WTC11 (cell line): ENCODE measurements at regions of chr20 and their contacts with region 1.

Region 1: DNA sequence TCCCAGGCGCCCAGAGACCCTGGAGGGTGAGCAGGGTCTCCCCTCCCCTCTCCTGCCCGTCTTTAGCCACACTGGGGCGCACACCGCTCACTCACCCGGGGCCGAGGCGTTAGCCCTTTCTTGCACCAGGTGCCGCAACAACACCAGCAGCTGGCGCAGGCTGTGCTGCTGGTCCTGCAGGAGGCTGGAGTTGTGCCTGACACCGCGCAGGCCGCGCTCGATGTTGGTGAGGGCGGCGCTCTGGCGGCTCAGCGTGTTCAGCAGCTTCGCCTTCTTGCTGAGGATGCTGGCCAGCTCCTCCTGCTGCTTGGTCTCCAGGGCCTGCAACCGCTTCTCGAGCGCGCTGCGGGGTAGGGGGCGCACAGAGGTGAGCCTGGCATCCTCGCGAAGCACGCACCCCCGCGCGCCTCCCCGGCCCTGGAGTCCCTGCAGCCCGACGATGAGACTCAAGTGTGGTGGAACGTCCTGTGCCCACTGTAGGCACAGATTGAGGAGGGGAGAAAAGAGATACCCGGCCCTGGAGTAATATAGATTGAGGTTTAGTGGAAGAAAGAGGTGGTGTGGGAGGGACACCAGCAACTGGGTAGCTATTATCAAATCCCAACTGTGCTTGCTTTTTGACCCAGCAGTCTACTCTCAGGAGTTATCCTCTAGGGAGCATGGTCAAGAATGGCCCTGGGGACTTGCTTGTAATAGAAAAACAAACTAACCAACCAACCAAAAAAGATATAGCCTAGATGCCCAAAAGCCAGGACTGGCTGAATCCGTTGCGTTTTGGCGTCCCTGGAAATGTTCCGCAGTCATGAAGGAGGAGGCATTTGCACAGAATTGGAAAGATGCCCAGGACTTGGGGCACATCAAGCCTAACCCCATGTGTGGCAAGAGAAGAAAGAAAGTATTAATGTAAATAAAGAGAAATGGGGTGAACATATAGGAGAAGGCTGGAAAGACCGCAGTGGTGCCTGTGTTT is 30.9 kb downstream of the ANGPT4 start:
- DNase-seq: peak; percentile 90
- ATAC-seq: peak; percentile 99
- H3K4me3 Mint-ChIP-seq: peak overlapping the region; percentile 55
- H3K27ac Mint-ChIP-seq: no peak overlapping the region
- H3K4me1 Mint-ChIP-seq: peaks cover 9% of the 10 kb centered on the region
- H3K27me3 Mint-ChIP-seq: peaks cover 17% of the 10 kb centered on the region
- CTCF ChIP-seq: no peak

Region 2: GRCh38 chr20:667391-667964 is 217.8 kb before region 1 on chr20:
- CTCF ChIA-PET with region 1: no interaction called
- POLR2A ChIA-PET with region 1: no interaction called
- DNase-seq: peak; percentile 87
- ATAC-seq: peak; percentile 54
- H3K4me3 Mint-ChIP-seq: no peak overlapping the region
- H3K27ac Mint-ChIP-seq: no peak overlapping the region
- H3K4me1 Mint-ChIP-seq: peaks cover 49% of the 10 kb centered on the region
- H3K27me3 Mint-ChIP-seq: peaks cover 30% of the 10 kb centered on the region
- CTCF ChIP-seq: peak; percentile 84

Region 3: DNA sequence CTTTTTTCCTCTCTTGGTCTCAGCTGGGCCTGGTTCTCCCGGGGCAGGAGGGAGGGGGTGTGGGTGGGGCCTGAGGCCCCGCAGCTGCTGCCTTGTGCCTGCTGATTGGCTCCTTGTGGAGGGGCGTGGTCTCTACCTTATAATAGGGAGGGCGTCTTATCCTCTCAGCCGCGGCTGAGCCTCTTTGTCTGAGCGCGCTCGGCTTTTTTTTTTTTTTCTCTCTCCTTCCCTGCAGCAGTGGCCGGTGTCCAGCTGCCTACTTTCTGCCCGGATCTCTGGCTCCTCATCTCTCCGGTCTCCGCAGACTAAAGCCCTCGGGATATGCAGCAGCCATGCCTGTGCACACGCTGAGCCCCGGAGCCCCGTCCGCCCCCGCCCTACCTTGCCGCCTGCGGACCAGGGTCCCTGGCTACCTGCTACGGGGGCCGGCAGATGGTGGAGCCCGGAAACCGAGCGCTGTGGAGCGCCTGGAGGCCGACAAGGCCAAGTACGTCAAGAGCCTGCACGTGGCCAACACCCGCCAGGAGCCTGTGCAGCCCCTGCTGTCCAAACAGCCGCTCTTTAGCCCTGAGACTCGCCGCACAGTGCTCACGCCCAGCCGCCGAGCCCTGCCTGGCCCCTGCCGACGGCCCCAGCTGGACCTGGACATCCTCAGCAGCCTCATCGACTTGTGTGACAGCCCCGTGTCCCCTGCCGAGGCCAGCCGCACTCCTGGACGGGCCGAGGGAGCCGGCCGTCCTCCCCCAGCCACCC is 40.6 kb before region 1 on chr20:
- CTCF ChIA-PET with region 1: interaction called, 10 read pairs
- POLR2A ChIA-PET with region 1: no interaction called
- DNase-seq: peak; percentile 92
- ATAC-seq: peak; percentile 87
- H3K4me3 Mint-ChIP-seq: peak overlapping the region; percentile 70
- H3K27ac Mint-ChIP-seq: no peak overlapping the region
- H3K4me1 Mint-ChIP-seq: peaks cover 44% of the 10 kb centered on the region
- H3K27me3 Mint-ChIP-seq: peaks cover 12% of the 10 kb centered on the region
- CTCF ChIP-seq: no peak

Region 4: GRCh38 chr20:905396-905961 is 20.2 kb after region 1 on chr20:
- CTCF ChIA-PET with region 1: interaction called, 36 read pairs
- POLR2A ChIA-PET with region 1: no interaction called
- DNase-seq: no peak
- ATAC-seq: no peak
- H3K4me3 Mint-ChIP-seq: no peak overlapping the region
- H3K27ac Mint-ChIP-seq: no peak overlapping the region
- H3K4me1 Mint-ChIP-seq: peaks cover 3% of the 10 kb centered on the region
- H3K27me3 Mint-ChIP-seq: no peaks in the 10 kb centered on the region; the same call in 1 of the 2 replicates
- CTCF ChIP-seq: no peak

Region 5: GRCh38 chr20:916125-916799 is 31.0 kb after region 1 on chr20 and contains the start of gene ANGPT4:
- CTCF ChIA-PET with region 1: interaction called, 36 read pairs
- POLR2A ChIA-PET with region 1: no interaction called
- DNase-seq: peak; percentile 18
- ATAC-seq: peak; percentile 27
- H3K4me3 Mint-ChIP-seq: peak within 1 kb of the TSS; percentile 12; the same call in 1 of the 2 replicates
- H3K27ac Mint-ChIP-seq: no peak within 1 kb of the TSS; the same call in 1 of the 2 replicates
- H3K4me1 Mint-ChIP-seq: peaks cover 12% of the 10 kb centered on the region
- H3K27me3 Mint-ChIP-seq: no peaks in the 10 kb centered on the region
- CTCF ChIP-seq: no peak
- total RNA-seq, gene ANGPT4: 0.20 to 0.32 TPM (median 0.25 TPM) in 3 replicates